Panc1 (cell line): ENCODE measurements at regions of chr18 and their contacts with region 1.

Region 1: GRCh38 chr18:9366192-9366591 is 31.6 kb downstream of the TWSG1 start:
- DNase-seq: no peak
- ATAC-seq: peak; percentile 84
- H3K4me3 ChIP-seq: no peak overlapping the region
- H3K27ac ChIP-seq: no peak overlapping the region
- H3K4me1 ChIP-seq: no peaks in the 10 kb centered on the region
- H3K27me3 ChIP-seq: no peaks in the 10 kb centered on the region
- CTCF ChIP-seq: no peak; the same call in 1 of the 2 replicates

Region 2: DNA sequence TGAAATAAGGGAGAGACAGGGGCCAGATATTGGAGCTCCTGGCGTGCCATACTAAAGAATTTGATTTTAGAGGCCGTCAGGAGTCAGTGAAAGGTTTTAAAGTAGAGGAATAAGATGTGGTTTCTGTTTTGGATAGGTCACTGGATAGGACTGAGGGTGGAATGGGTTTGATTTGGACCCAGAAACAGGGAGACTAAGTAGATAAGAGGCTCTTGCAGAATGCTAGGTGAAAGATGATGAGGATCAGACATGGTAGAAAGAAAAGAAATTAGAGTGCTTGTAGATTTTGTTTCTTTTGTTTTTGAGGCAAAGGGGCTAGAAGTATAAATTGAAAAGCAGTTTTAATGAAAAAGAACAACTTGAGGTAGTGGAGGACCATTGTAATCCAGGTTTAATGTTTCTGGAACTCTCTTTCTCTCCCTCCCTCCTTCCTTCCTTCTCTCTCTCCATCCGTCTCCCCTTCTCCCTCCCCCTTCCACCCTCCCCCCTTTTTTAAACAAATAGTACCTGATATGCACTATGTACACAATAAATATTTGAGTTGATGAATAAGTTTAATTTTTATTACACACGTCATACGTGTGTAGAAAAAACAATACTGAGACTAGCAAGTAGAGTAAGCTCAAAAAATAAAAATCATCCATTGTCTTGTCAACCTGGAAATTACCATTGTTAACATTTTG is 261.8 kb before region 1 on chr18:
- CTCF ChIA-PET with region 1: interaction called, 11 read pairs
- POLR2A ChIA-PET with region 1: no interaction called
- in situ Hi-C with region 1: no loop called
- intact Hi-C with region 1: no loop called
- DNase-seq: no peak
- ATAC-seq: no peak
- H3K4me3 ChIP-seq: peak overlapping the region; percentile 66 to 77
- H3K27ac ChIP-seq: peak overlapping the region; percentile 93
- H3K4me1 ChIP-seq: peaks cover 47% of the 10 kb centered on the region
- H3K27me3 ChIP-seq: no peaks in the 10 kb centered on the region
- CTCF ChIP-seq: no peak

Region 3: DNA sequence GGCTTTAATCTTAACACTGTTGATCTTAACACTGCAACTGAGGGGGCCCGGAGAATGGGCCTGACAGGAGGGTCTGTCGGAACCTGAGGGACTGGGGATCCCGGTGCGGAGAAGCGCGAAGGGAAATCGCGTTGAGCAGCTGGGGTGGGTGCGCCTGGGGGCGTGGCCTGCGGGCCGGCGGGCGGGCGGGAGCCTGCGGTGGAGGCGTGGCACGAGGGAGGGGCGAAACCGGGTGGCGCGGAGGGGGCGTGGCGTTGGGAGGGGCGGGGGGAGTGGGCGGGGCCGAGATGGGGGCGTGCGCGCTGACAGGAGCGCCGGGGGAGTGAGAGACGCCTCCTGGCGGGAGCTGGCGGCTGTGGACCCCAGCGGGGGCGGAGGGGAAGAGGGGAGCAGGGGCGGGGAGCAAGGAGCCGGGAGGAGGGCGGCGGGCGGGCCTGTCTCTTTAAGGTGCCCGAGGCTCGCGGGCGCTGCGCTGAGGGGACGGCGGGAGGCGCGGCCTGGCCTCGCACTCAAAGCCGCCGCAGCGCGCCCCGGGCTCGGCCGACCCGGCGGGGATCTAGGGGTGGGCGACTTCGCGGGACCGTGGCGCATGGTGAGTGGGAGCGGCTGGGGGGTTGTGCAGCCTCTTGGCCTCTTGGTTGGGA is 31.7 kb before region 1 on chr18 and contains the start of gene TWSG1:
- CTCF ChIA-PET with region 1: no interaction called
- POLR2A ChIA-PET with region 1: no interaction called
- in situ Hi-C with region 1: no loop called
- intact Hi-C with region 1: no loop called
- DNase-seq: peak; percentile 22
- ATAC-seq: peak; percentile 95
- H3K4me3 ChIP-seq: peak within 1 kb of the TSS; percentile 78 to 81
- H3K27ac ChIP-seq: peak within 1 kb of the TSS; percentile 80
- H3K4me1 ChIP-seq: peaks cover 8% of the 10 kb centered on the region; the same call in 1 of the 2 replicates
- H3K27me3 ChIP-seq: no peaks in the 10 kb centered on the region
- CTCF ChIP-seq: peak; percentile 72
- total RNA-seq, gene TWSG1: 54.1 TPM

Region 4: DNA sequence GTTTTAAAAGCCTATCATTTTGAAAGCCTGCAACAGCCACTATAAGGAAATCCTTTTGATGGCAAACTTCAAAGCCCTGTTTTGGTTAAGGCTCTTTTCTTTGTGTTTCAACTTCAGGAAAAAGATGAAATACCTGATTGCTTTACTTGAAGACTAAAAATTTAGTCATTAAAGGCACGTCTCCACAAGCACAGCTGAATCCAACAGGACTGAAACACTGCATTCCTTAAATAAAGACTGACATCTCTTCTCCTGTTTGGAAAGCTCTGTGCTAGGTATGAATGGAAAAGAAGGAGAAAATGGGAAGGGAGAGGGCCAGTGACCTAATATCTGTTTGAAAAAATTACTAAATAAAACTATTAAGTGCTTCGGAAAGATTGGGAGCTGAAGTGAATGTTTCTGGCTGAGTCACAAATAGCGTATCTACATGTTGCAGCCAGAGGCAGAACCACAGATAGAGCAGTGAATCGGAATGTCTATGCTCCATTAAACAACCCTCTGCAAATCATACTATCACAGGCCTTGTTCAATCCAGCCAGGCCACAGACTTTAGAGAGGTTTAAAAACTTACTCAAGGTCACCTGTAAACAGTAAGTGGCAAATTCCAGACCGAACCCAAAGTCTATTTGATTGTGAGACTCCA is 88.0 kb after region 1 on chr18:
- CTCF ChIA-PET with region 1: no interaction called
- POLR2A ChIA-PET with region 1: no interaction called
- in situ Hi-C with region 1: no loop called
- intact Hi-C with region 1: no loop called
- DNase-seq: no peak
- ATAC-seq: no peak
- H3K4me3 ChIP-seq: no peak overlapping the region
- H3K27ac ChIP-seq: no peak overlapping the region
- H3K4me1 ChIP-seq: no peaks in the 10 kb centered on the region
- H3K27me3 ChIP-seq: no peaks in the 10 kb centered on the region
- CTCF ChIP-seq: no peak

Region 5: DNA sequence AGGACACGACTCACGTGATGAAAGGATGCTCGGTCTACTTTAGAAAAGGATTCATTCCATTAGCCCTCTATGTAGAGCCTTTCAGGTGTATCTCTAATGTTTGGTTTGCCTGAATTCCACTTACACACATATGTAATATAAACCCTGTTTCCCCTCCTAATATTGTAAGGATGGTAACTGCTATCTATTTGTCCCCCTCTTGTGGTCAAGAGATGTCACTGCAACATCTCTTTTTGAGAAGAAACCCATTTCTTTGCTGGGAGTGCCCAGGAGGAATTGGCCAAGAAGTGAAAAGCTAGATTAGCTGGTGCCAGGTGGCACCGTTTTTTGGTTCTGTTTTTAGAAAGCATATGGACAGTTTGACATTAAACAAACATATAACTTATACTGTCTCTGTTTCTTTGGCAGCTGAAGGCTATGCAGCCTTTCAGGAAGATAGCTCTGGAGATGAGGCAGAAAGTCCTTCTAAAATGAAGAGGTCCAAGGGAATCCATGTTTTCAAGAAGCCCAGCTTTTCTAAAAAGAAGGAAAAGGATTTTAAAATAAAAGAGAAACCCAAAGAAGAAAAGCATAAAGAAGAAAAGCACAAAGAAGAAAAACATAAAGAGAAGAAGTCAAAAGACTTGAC is 150.4 kb after region 1 on chr18:
- CTCF ChIA-PET with region 1: no interaction called
- POLR2A ChIA-PET with region 1: no interaction called
- in situ Hi-C with region 1: no loop called
- intact Hi-C with region 1: loop called (anchors 10 kb)
- DNase-seq: no peak
- ATAC-seq: peak; percentile 50; the same call in 1 of the 2 replicates
- H3K4me3 ChIP-seq: no peak overlapping the region
- H3K27ac ChIP-seq: no peak overlapping the region
- H3K4me1 ChIP-seq: peaks cover 7% of the 10 kb centered on the region
- H3K27me3 ChIP-seq: no peaks in the 10 kb centered on the region
- CTCF ChIP-seq: peak; percentile 86